ENCODE measurements at regions of chr2 and their contacts with region 1.

Region 1: GRCh38 chr2:53312721-53313120 is 454.9 kb upstream of the CHAC2 start:
- DNase-seq: no peak
- H3K4me3 ChIP-seq: no peak overlapping the region
- H3K27ac ChIP-seq: peak overlapping the region; percentile 51
- H3K4me1 ChIP-seq: peaks cover 11% of the 10 kb centered on the region
- H3K27me3 ChIP-seq: no peaks in the 10 kb centered on the region
- CTCF ChIP-seq: no peak

Region 2: DNA sequence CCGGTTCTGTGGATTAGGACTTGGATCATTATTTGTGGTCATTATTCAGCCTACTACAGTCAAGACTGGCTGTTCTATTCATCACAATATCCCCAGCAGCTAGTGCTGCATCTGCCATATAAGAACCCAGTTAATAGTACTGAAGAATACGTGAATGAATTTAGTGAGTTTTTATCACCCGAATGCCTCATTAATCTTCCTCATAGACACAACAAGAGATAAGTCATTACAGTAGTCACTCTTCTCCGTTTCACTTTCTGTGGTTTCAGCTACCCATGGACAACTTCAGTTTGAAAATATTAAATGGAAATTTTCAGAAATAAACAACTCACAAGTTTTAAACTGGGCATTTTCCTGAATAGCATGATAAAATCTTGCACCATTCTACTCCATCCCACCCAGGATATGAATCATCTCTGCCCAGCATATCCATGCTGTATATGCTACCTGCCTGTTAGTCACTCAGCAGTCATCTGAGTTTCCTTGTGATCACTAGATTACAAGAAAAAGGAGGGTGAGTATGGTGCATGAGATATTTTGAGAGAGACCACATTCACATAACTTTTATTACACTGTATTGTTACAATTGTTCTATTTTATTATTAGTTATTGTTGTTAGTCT is 91.2 kb after region 1 on chr2:
- CTCF ChIA-PET with region 1: no interaction called
- POLR2A ChIA-PET with region 1: interaction called, 10 read pairs
- intact Hi-C with region 1: loop called (anchors 5 kb)
- DNase-seq: peak; percentile 25 to 83
- H3K4me3 ChIP-seq: no peak overlapping the region
- H3K27ac ChIP-seq: peak overlapping the region; percentile 92
- H3K4me1 ChIP-seq: peaks cover 29% of the 10 kb centered on the region
- H3K27me3 ChIP-seq: no peaks in the 10 kb centered on the region
- CTCF ChIP-seq: no peak

Region 3: GRCh38 chr2:53515435-53516332 is 203.0 kb after region 1 on chr2:
- CTCF ChIA-PET with region 1: no interaction called
- POLR2A ChIA-PET with region 1: no interaction called
- intact Hi-C with region 1: loop called (anchors 10 kb)
- DNase-seq: peak in 1 of 2 experiments; percentile 13
- H3K4me3 ChIP-seq: no peak overlapping the region
- H3K27ac ChIP-seq: no peak overlapping the region
- H3K4me1 ChIP-seq: peaks cover 22% of the 10 kb centered on the region
- H3K27me3 ChIP-seq: no peaks in the 10 kb centered on the region
- CTCF ChIP-seq: peak; percentile 48